Aorta (tissue), 5 donors: ENCODE measurements at regions of chr15 and their contacts with region 1.

Region 1: GRCh38 chr15:62896978-62897647 is 145.4 kb upstream of the TPM1 start:
- DNase-seq: peak; percentile 93 to 96
- ATAC-seq: peak; percentile 93
- H3K4me3 ChIP-seq: no peak overlapping the region
- H3K27ac ChIP-seq: peak overlapping the region; percentile 23 to 24
- H3K4me1 ChIP-seq: peaks cover 2 to 3% of the 10 kb centered on the region in 2 donors
- H3K27me3 ChIP-seq: no peaks in the 10 kb centered on the region

Region 2: GRCh38 chr15:62928242-62928995 is 31.3 kb after region 1 on chr15:
- intact Hi-C with region 1: loop called (anchors 2 to 5 kb)
- DNase-seq: peak in 1 of 2 donors; percentile 70
- ATAC-seq: peak; percentile 84
- H3K4me3 ChIP-seq: no peak overlapping the region
- H3K27ac ChIP-seq: peak overlapping the region in 1 of 2 donors; percentile 96
- H3K4me1 ChIP-seq: peaks cover 4 to 10% of the 10 kb centered on the region in 2 donors
- H3K27me3 ChIP-seq: no peaks in the 10 kb centered on the region